ENCODE measurements at regions of chr5 and their contacts with region 1.

Region 1: GRCh38 chr5:99032234-99033013 is 103.6 kb upstream of the CHD1 start:
- DNase-seq: peak; percentile 45
- H3K4me3 ChIP-seq: no peak overlapping the region
- CTCF ChIP-seq: peak; percentile 60

Region 2: GRCh38 chr5:98899456-98899855 is 133.0 kb before region 1 on chr5:
- CTCF ChIA-PET with region 1: interaction called, 75 read pairs
- POLR2A ChIA-PET with region 1: no interaction called
- DNase-seq: no peak
- H3K4me3 ChIP-seq: no peak overlapping the region
- CTCF ChIP-seq: no peak

Region 3: GRCh38 chr5:98905857-98906690 is 126.3 kb before region 1 on chr5:
- CTCF ChIA-PET with region 1: interaction called, 75 read pairs
- POLR2A ChIA-PET with region 1: no interaction called
- DNase-seq: no peak
- H3K4me3 ChIP-seq: no peak overlapping the region
- CTCF ChIP-seq: peak; percentile 21

Region 4: GRCh38 chr5:98911280-98912040 is 121.0 kb before region 1 on chr5:
- CTCF ChIA-PET with region 1: interaction called, 49 read pairs
- POLR2A ChIA-PET with region 1: no interaction called
- DNase-seq: no peak
- H3K4me3 ChIP-seq: no peak overlapping the region
- CTCF ChIP-seq: no peak